Right ventricle myocardium inferior (tissue), 1 donor: ENCODE measurements at regions of chr2 and their contacts with region 1.

Region 1: DNA sequence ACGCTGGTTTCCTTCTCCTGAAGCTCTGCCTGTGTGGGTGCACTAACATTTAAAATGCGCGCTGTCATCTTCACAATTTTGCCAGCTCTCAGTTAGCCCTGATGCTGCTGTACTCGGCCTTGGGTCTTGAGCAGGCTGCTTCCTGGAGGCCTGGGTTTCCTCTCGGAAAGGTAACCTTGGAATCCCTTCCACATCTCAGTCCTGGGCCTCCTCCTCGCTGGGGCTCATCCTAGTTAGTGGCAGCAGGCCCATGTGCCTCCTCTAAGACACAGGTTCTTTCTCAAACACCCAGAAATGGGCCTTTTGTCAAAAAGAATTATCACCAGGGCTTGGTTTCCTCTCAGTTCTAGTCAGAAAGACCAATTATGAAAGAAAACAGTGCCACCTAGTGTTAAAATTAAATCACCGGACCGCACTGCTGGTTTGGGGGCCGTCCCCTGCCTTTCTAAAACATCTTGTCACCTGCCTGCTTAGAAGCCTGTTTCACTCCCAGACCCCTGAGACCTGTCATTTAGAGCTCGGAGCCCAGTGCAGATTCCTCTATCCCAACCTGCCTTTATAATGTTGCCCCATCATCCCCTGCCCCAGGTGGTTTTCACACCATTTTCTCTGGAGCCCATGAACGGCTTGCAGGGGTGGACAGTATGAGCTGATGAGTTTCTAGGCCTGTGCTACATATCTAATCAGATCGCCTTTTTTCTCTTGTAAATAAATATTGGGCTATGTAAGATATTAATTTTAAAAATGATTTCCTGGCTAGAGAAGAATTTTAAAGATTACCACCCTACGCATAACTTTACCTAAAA is 42.4 kb downstream of the HK2 start:
- DNase-seq: no peak
- ATAC-seq: peak; percentile 62

Region 2: GRCh38 chr2:74690571-74690970 is 185.7 kb before region 1 on chr2:
- intact Hi-C with region 1: loop called (anchors 1 kb)
- DNase-seq: no peak
- ATAC-seq: peak; percentile 69

Region 3: GRCh38 chr2:74715078-74715791 is 161.0 kb before region 1 on chr2:
- intact Hi-C with region 1: loop called (anchors 1 kb)
- DNase-seq: peak; percentile 90
- ATAC-seq: peak; percentile 92